ENCODE measurements at regions of chr12 and their contacts with region 1.

Region 1: DNA sequence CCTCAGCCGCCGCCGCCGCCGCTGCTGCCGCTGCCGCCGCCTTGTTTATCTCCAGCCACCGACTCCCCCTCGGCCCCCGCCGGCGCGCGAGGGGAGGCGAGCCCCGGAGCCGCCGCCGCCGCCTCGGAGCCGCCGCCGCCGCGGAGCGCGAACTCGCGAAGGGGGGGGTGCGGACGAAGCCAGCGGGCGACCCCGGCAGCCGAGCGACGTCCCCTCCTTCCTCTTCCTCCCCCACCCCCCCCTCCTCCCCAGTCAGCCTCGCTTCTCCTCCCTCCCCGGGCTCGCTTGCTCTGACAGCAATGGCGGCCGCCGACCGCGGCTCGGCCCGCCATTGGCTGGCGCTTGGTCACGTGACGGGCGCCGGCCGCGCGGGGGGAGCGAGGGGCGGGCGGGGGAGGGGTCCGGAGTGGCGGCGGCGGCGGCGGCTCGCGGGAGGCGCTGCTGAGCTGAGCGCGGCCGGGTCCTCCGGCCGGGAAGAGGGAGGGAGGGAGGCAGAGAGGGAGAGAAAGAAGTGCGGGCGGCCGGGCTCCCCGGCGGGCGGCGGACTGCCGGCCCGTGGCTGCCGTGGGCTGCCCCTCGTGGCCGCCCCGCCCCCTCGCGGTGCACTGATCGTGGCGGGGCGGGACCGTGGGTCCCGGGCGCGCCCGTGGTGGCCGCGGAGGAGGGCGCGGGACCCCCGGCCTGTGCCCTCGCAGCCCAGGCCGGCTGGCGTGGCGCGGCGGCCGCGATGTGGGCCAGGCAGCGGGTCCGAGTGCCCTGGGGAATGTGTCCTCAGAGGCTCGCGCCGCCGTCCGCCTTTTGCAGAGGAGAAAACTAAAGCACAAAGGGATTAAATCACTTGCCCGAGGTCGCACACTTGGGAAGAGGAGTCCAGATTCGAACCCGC is at the start of gene MED13L:
- DNase-seq: peak; percentile 85
- H3K4me3 Mint-ChIP-seq: peak within 1 kb of the TSS; percentile 91
- H3K27ac Mint-ChIP-seq: peak within 1 kb of the TSS; percentile 91
- H3K4me1 Mint-ChIP-seq: peaks cover 44% of the 10 kb centered on the region
- H3K27me3 Mint-ChIP-seq: peaks cover 6% of the 10 kb centered on the region
- total RNA-seq, gene MED13L: 49.0 and 52.5 TPM in 2 replicates

Region 2: DNA sequence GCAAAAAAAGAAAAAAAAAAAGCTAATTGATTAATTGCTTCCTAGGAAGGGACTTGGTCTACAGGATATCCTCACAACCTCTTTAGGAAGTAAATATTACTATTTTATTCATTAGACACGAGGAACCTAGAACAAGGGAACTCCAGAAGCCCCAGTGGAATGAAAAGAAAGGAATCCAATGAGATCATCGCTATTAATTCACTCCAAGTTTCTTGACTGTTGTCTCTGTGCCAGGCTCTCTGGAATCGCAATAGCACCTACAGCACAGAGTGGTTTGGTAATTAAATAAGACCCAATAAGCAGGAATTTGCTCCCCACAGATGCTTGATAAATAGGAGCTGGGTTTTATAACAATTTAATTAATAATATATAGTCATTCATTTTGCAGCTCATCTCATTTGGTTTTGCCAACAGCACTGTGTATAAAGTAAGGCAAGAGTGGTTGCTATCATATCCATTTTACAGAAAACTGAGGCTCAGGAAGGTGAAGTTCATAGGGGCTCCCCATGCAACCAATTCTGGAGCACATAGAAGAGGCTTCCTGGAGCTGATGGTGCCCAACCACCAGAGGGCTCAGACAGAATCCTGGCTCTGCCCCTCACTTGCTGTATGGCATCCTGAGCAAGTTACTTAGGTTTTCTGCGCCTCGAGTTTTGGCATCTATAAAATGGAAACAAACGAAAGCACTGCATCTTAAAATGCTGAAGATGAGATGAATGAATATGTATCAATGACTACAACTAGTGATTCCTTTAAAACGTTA is 420.3 kb before region 1 on chr12:
- intact Hi-C with region 1: no loop called
- DNase-seq: no peak
- H3K4me3 Mint-ChIP-seq: no peak overlapping the region
- H3K27ac Mint-ChIP-seq: no peak overlapping the region
- H3K4me1 Mint-ChIP-seq: no peaks in the 10 kb centered on the region
- H3K27me3 Mint-ChIP-seq: peaks cover 3% of the 10 kb centered on the region

Region 3: DNA sequence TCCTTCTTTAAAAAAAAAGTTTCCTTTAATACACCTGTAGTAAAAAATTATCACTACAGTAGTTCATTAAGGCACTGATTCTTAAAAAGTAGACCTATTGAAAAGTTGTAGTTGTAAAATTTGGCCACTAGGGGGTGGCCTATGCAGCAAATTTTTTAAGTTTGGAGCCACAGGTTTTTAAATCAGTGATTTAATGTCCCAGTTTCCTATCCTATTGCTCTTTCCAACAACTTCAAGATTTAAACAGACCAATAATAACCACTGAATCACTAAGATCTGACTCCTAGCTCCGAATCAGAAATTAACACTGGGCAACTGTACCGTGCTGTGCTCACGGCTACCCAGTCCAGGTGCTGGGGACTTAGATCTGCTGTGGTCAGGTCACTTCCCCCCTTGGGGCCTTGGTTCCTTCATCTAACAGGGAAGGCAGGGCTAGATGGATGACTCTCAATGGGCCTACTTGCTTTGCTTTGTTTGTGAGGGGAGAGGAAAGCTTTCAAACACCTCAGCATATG is 279.5 kb before region 1 on chr12:
- intact Hi-C with region 1: loop called (anchors 5 kb)
- DNase-seq: no peak
- H3K4me3 Mint-ChIP-seq: no peak overlapping the region
- H3K27ac Mint-ChIP-seq: no peak overlapping the region
- H3K4me1 Mint-ChIP-seq: peaks cover 5% of the 10 kb centered on the region
- H3K27me3 Mint-ChIP-seq: no peaks in the 10 kb centered on the region

Region 4: DNA sequence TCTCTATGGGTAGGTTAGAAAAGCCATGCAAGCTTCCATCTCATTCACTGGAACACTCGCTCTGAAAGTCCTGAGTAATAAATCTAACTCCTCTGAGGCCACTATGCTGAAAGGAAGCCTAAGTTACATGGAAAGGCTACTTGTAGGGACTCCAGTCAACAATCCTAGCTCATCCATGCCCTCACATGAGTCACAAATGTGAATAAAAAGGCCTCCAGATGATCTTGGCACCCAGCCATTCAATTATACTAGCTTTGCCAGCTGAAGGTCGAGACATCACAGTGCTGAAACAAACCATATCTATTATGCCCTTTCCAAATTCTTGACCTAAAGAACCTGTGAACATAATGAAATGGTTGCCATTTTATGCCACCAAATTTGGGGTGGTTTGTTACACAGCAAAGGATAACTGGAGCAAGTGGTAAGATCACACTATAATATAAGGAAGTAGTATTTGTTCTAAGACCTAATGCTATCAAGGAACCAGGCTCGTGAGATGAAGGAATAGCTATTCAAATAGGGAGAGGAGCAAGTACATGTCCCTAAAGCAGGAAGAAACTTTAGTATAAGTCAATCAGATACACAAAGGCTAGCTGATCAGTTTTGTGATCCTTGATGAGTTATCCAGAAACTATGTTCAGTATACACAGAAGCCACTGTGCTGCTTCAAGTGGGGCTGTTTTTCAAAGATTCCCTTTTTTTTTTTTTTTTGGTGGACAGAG is 142.3 kb before region 1 on chr12:
- intact Hi-C with region 1: loop called (anchors 5 kb)
- DNase-seq: no peak
- H3K4me3 Mint-ChIP-seq: no peak overlapping the region
- H3K27ac Mint-ChIP-seq: peak overlapping the region; percentile 86
- H3K4me1 Mint-ChIP-seq: peaks cover 57% of the 10 kb centered on the region
- H3K27me3 Mint-ChIP-seq: no peaks in the 10 kb centered on the region

Region 5: GRCh38 chr12:116236148-116236731 is 41.4 kb before region 1 on chr12:
- intact Hi-C with region 1: loop called (anchors 5 kb)
- DNase-seq: peak; percentile 27
- H3K4me3 Mint-ChIP-seq: no peak overlapping the region
- H3K27ac Mint-ChIP-seq: no peak overlapping the region
- H3K4me1 Mint-ChIP-seq: peaks cover 22% of the 10 kb centered on the region
- H3K27me3 Mint-ChIP-seq: no peaks in the 10 kb centered on the region

Region 6: GRCh38 chr12:116303929-116304328 is 26.3 kb after region 1 on chr12:
- intact Hi-C with region 1: no loop called
- DNase-seq: no peak
- H3K4me3 Mint-ChIP-seq: no peak overlapping the region
- H3K27ac Mint-ChIP-seq: no peak overlapping the region
- H3K4me1 Mint-ChIP-seq: no peaks in the 10 kb centered on the region
- H3K27me3 Mint-ChIP-seq: peaks cover 15% of the 10 kb centered on the region

Region 7: DNA sequence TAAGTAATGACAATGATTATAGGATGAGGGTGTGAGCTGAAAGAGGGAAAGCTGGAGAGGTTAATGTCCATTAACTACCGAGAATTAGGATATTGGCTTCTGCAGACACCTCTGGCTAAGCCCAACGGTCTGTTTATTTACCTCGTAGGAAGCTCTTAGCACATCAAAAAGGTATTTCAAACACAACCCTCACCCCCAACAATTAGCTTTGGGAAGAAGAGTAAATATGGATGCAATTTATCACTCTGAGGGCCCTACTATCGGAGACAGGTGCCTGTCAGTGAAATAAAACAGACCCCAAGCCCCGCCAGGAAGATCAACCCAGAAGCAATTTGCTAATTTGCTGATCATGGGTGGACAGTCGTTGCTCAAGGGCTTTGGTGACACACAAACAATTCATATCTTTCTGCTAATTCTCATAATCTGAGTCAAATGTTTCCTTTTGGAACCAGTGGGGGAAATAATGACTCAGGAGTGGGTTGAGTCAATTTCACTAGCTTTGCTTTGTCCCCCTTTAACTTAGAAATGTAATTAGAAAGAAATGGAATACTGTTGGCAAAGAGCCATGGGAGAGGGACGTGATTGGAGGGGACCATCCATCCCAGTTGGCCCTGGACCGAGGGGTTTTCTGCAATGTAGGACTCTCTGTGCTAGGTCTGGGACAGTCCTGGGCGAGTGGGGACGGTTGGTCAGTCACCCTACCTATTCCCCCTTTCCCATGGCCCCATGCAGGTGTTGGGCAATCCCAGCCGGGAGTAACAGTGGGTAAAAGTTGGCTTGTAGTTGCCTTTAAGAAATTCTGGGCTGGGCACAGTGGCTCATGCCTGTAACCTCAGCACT is 98.9 kb after region 1 on chr12:
- intact Hi-C with region 1: loop called (anchors 5 kb)
- DNase-seq: no peak
- H3K4me3 Mint-ChIP-seq: no peak overlapping the region
- H3K27ac Mint-ChIP-seq: no peak overlapping the region
- H3K4me1 Mint-ChIP-seq: peaks cover 11% of the 10 kb centered on the region
- H3K27me3 Mint-ChIP-seq: peaks cover 6% of the 10 kb centered on the region

Region 8: DNA sequence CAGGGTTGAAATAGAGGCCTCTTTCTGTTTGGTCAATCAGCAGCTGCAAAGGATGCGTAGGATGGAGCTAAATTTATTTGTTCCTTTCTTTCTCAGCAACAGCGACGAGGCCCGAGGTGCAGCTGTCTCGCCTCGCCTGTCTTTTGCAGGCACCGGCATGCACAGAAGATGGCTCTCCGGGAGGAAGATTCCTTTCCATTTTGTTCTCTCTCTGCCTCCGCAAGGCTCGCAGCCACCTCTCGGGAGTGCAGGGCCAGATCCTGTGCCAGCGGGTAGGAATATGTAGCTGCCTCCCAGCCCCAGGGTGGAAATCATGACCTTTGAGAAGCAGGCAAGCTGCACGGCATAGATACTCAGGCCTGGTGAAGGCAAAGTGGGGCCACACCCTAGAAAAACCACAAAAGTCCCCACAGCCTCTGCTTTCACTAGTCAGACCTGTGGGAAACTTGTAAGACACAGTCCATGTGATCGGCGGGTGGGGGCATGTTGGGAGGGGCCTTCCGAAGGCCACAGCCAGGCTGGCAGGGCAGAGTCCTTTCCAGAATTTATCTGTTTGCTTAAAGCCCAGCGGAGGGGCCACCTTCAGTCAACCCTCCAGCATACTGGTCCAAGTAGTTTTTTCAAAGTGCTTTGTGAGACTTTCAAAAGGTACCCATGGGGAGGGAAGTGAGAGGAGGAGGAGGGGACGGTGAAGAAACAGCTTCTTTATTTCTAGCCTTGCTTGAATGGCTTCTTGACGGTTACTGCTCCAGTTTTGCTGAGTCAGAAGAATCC is 281.7 kb after region 1 on chr12 and contains the start of gene MAP1LC3B2:
- intact Hi-C with region 1: loop called (anchors 2 kb)
- DNase-seq: peak; percentile 86
- H3K4me3 Mint-ChIP-seq: peak within 1 kb of the TSS; percentile 51
- H3K27ac Mint-ChIP-seq: peak within 1 kb of the TSS; percentile 95
- H3K4me1 Mint-ChIP-seq: peaks cover 42% of the 10 kb centered on the region
- H3K27me3 Mint-ChIP-seq: no peaks in the 10 kb centered on the region
- total RNA-seq, gene MAP1LC3B2: 0.37 and 0.60 TPM in 2 replicates